B cell (primary cell): ENCODE measurements at regions of chr1 and their contacts with region 1.

Region 1: DNA sequence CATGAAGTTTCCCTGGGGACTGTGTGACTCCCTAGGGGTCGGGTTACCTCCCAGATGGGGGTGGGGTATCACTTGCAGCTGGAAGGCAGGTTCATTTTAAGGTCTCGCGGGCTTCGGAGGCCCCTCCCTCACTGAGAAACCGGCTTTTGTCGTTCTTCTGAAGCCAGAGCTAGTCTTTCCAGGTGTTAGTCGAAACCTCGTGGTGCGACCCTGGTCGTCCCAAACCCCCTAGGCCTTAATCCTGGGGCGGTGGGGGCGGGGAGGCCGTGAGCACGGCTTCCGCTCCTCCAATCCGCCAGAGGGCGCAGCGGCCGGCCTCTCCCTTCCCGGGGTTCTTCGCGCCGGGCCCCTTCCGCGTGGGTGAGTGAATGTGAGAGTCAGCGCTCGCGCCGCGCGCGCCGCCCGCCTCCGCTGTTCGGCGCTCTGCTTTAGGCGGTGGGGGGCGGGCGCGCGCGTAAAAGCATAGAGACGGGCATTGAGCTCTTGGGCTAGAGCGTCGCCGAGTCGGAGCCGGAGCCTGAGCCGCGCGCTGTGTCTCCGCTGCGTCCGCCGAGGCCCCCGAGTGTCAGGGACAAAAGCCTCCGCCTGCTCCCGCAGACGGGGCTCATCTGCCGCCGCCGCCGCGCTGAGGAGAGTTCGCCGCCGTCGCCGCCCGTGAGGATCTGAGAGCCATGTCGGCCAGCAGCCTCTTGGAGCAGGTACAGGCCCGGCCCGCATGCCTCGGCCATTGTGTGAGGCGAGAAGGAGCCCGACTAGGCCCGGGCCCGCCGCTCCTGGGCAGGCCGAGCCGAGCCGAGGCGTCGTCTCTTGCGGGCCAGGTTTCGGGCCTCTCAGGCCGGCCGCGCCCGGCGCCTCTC is at the start of gene YTHDF2:
- DNase-seq: peak; percentile 99
- ATAC-seq: peak; percentile 91
- H3K4me3 ChIP-seq: peak within 1 kb of the TSS; percentile 75 to 91 (median 84)
- H3K4me3 Mint-ChIP-seq: peak within 1 kb of the TSS; percentile 95
- H3K27ac ChIP-seq: peak within 1 kb of the TSS; percentile 92 to 94
- H3K27ac Mint-ChIP-seq: peak within 1 kb of the TSS; percentile 95
- H3K4me1 ChIP-seq: peaks cover 16 to 23% of the 10 kb centered on the region in 2 donors
- H3K4me1 Mint-ChIP-seq: peaks cover 39% of the 10 kb centered on the region
- H3K27me3 ChIP-seq: no peaks in the 10 kb centered on the region
- H3K27me3 Mint-ChIP-seq: no peaks in the 10 kb centered on the region
- CTCF ChIP-seq: peak; percentile 91
- total RNA-seq, gene YTHDF2: 58.8 and 73.0 TPM in 2 replicates

Region 2: DNA sequence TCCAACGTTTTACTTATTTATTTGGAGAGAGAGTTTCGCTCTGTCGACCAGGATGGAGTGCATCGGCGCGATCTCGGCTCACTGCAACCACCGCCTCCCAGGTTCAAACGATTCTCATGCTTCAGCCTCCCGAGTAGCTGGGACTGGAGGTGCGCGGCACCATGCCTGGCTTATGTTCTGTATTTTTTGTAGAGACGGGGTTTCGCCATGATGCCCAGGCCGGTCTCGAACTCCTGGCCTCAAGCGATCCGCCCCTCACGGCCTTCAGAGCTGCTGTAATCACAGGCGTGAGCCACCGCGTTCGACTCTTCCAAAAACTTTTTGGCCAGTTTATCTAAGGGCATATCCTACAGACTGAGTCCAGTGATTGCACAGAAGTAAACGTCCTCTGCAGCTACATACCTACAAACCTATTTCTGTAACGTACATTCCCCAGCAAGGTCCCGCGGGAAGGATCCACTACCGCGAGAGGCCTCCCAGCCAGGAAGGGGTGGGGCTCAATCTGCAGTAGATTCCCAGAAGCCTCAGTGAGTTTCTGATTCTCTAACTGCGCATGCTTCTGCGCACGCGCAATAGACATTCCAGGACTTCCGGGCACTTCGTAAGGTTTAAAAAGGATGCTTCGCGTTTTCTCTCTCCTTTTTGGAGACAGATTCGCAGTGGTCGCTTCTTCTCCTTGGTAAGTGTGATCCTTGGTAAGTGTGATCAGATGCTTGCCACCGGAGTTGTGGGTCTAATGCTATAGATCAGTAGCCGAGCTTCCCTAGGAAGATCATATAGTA is 231.1 kb before region 1 on chr1 and contains the start of gene RCC1:
- CTCF ChIA-PET with region 1: no interaction called
- POLR2A ChIA-PET with region 1: interaction called, 5 read pairs
- intact Hi-C with region 1: loop called (anchors 1 kb)
- DNase-seq: peak; percentile 98
- ATAC-seq: peak; percentile 94
- H3K4me3 ChIP-seq: peak within 1 kb of the TSS; percentile 60 to 84 (median 80)
- H3K4me3 Mint-ChIP-seq: peak within 1 kb of the TSS; percentile 97
- H3K27ac ChIP-seq: peak within 1 kb of the TSS; percentile 65 to 67
- H3K27ac Mint-ChIP-seq: peak within 1 kb of the TSS; percentile 98
- H3K4me1 ChIP-seq: peaks cover 38 to 48% of the 10 kb centered on the region in 2 donors
- H3K4me1 Mint-ChIP-seq: peaks cover 42% of the 10 kb centered on the region
- H3K27me3 ChIP-seq: no peaks in the 10 kb centered on the region
- H3K27me3 Mint-ChIP-seq: no peaks in the 10 kb centered on the region
- CTCF ChIP-seq: no peak
- total RNA-seq, gene RCC1: 16.3 and 17.5 TPM in 2 replicates

Region 3: DNA sequence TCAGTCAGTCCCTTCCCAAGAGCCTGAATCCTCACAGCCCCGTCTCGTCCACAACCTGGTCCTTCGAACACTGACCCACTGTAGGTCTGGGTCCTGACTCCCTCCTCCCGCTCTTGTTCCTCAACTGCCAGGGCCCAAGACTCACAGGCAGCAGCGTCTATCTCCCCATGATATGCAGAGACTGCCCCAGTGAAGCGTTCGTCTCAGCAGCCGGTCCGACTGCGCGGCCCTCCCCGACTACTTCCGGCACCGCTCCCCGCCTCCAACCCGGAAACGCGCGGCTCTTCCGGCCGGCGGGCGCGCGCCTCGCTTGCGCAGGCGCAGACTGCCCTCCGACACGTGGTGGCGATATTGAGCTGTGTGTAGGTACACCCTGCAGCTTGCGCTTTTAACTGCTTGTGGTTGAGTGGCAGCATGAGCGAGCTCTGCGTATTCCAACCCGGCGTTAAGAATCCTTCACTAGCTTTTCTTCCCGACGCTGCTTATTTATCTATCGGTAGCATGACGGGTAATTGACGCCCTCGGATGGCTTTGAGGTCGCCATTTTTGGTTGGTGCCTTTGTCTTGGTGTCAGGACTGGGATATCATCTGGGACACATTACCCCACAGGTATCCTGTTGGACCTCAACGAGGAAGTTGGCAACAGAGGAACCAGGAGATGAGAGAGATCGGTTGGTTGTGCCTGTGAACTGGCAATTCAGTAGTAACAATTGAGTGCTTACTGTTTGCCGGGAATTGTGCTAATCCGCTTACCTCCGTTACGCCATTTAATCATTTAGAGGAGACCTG is 93.6 kb before region 1 on chr1 and contains the start of gene TAF12:
- CTCF ChIA-PET with region 1: interaction called, 46 read pairs
- POLR2A ChIA-PET with region 1: interaction called, 54 read pairs
- intact Hi-C with region 1: loop called (anchors 1 kb)
- DNase-seq: peak; percentile 97
- ATAC-seq: peak; percentile 84
- H3K4me3 ChIP-seq: peak within 1 kb of the TSS; percentile 67 to 91 (median 89)
- H3K4me3 Mint-ChIP-seq: peak within 1 kb of the TSS; percentile 100
- H3K27ac ChIP-seq: peak within 1 kb of the TSS; percentile 97 to 100
- H3K27ac Mint-ChIP-seq: peak within 1 kb of the TSS; percentile 99
- H3K4me1 ChIP-seq: peaks cover 29 to 31% of the 10 kb centered on the region in 2 donors
- H3K4me1 Mint-ChIP-seq: peaks cover 49% of the 10 kb centered on the region
- H3K27me3 ChIP-seq: no peaks in the 10 kb centered on the region
- H3K27me3 Mint-ChIP-seq: no peaks in the 10 kb centered on the region
- CTCF ChIP-seq: peak; percentile 54
- total RNA-seq, gene TAF12: 18.5 and 19.1 TPM in 2 replicates

Region 4: DNA sequence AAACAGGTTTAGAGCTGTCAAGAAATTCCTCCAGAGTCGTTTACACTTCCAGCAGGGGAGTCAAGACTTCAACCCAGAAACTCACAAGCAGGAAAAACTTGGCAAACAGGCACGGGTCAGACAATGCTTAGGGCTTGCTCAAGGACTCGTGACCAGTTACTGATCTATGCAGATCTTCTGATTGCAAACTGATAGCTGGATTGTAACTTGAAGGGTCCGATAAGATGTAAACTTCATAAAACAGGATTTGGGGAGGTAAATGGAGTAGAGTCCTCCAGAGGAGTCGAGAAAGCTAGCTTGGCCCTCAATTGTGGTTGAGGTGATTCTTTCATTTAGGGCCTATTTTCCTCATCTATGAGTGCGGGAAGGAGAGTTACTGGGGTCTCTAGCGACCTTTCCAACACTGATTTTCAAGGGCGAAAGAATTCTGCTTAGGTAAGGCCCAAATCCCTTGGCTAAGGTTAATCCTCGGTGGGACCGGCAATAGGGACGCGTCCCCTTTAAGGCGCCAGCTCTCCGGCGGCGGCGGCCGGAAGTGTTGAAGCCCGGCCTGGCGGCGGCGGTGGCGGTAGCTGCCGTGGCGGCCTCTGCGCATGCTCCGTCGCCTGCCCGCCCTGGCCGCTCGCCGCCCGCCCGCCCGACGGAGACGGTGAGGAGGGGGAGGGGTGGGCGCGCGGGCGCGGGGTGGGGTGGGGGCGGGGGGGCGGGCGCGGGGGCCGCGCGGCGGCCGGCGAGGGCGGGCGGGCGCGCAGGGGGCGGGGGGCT is 68.3 kb before region 1 on chr1 and contains the start of gene GMEB1:
- CTCF ChIA-PET with region 1: interaction called, 22 read pairs
- POLR2A ChIA-PET with region 1: interaction called, 28 read pairs
- intact Hi-C with region 1: loop called (anchors 1 kb)
- DNase-seq: peak; percentile 88
- ATAC-seq: peak; percentile 65
- H3K4me3 ChIP-seq: peak within 1 kb of the TSS; percentile 68 to 95 (median 94)
- H3K4me3 Mint-ChIP-seq: peak within 1 kb of the TSS; percentile 94
- H3K27ac ChIP-seq: peak within 1 kb of the TSS; percentile 95 to 98
- H3K27ac Mint-ChIP-seq: peak within 1 kb of the TSS; percentile 99
- H3K4me1 ChIP-seq: peaks cover 5 to 24% of the 10 kb centered on the region in 2 donors
- H3K4me1 Mint-ChIP-seq: peaks cover 19% of the 10 kb centered on the region
- H3K27me3 ChIP-seq: no peaks in the 10 kb centered on the region
- H3K27me3 Mint-ChIP-seq: no peaks in the 10 kb centered on the region
- CTCF ChIP-seq: no peak
- total RNA-seq, gene GMEB1: 21.7 and 24.8 TPM in 2 replicates

Region 5: GRCh38 chr1:28703629-28704028 is 33.0 kb before region 1 on chr1:
- CTCF ChIA-PET with region 1: no interaction called
- POLR2A ChIA-PET with region 1: no interaction called
- intact Hi-C with region 1: no loop called
- DNase-seq: no peak
- ATAC-seq: no peak
- H3K4me3 ChIP-seq: no peak overlapping the region
- H3K4me3 Mint-ChIP-seq: no peak overlapping the region
- H3K27ac ChIP-seq: no peak overlapping the region
- H3K27ac Mint-ChIP-seq: no peak overlapping the region
- H3K4me1 ChIP-seq: no peaks in the 10 kb centered on the region
- H3K4me1 Mint-ChIP-seq: no peaks in the 10 kb centered on the region
- H3K27me3 ChIP-seq: no peaks in the 10 kb centered on the region
- H3K27me3 Mint-ChIP-seq: no peaks in the 10 kb centered on the region
- CTCF ChIP-seq: no peak

Region 6: DNA sequence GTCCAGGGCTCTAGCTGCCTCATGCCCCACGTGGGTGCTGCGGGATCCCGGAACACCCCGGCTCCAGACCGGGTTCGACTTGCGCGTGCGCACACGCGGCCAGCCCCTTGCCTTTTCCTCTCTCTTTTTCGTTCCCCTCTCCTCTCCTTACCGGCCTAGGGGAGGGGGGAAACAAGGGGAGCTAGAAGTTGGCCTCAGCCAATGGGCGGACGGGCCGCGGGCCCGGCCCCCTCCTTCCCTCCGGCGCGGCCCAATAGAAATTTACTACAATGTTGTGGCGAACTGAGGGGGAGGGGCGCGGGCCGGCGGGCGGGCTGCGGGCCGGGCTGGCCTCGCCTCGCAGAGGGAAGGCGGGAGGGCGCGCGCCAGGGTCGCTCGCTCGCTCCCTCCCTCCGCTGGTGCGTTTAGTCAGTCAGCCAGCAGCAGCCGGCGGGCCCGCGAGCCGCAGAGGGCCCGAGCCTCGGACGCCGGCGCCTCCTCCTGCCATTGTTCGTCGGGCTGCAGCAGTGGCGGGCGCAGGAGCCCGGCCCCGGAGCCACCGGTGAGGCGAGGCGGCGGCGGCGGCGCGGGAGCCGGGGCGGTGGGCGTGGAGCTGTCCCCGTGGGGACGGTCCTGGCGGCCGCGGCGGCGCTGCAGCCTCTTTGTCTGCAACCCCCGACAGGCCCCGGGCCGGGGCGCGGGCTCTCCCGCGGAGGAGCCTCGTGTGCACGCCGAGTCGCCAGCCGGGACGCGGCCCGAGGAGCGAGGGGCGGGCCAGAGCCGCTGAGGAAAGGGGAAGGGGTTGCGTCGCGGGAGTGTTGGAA is 177.8 kb after region 1 on chr1 and contains the start of gene EPB41:
- CTCF ChIA-PET with region 1: no interaction called
- POLR2A ChIA-PET with region 1: no interaction called
- intact Hi-C with region 1: loop called (anchors 1 kb)
- DNase-seq: peak; percentile 93
- ATAC-seq: peak; percentile 92
- H3K4me3 ChIP-seq: peak within 1 kb of the TSS; percentile 58 to 87 (median 80)
- H3K4me3 Mint-ChIP-seq: peak within 1 kb of the TSS; percentile 99
- H3K27ac ChIP-seq: peak within 1 kb of the TSS; percentile 37 to 74
- H3K27ac Mint-ChIP-seq: peak within 1 kb of the TSS; percentile 94
- H3K4me1 ChIP-seq: peaks cover 19 to 27% of the 10 kb centered on the region in 2 donors
- H3K4me1 Mint-ChIP-seq: peaks cover 45% of the 10 kb centered on the region
- H3K27me3 ChIP-seq: no peaks in the 10 kb centered on the region
- H3K27me3 Mint-ChIP-seq: no peaks in the 10 kb centered on the region
- CTCF ChIP-seq: no peak
- total RNA-seq, gene EPB41: 186 and 203 TPM in 2 replicates